Ovary (tissue), 10 donors: ENCODE measurements at regions of chr5 and their contacts with region 1.

Region 1: GRCh38 chr5:3843706-3844105 is 248.1 kb downstream of the IRX1 start:
- DNase-seq: no peak
- H3K4me3 ChIP-seq: no peak overlapping the region
- H3K27ac ChIP-seq: no peak overlapping the region
- H3K4me1 ChIP-seq: no peaks in the 10 kb centered on the region
- H3K27me3 ChIP-seq: no peaks in the 10 kb centered on the region
- CTCF ChIP-seq: no peak
- EP300 ChIP-seq: no peak
- POLR2A ChIP-seq: no peak

Region 2: GRCh38 chr5:3878267-3878666 is 34.6 kb after region 1 on chr5:
- intact Hi-C with region 1: loop called in 1 of 4 experiments (anchors 1 kb)
- DNase-seq: no peak
- H3K4me3 ChIP-seq: no peak overlapping the region
- H3K27ac ChIP-seq: no peak overlapping the region
- H3K4me1 ChIP-seq: no peaks in the 10 kb centered on the region
- H3K27me3 ChIP-seq: no peaks in the 10 kb centered on the region
- CTCF ChIP-seq: no peak
- EP300 ChIP-seq: no peak
- POLR2A ChIP-seq: no peak

Region 3: GRCh38 chr5:4068171-4068570 is 224.5 kb after region 1 on chr5:
- intact Hi-C with region 1: no loop called
- DNase-seq: no peak
- H3K4me3 ChIP-seq: no peak overlapping the region
- H3K27ac ChIP-seq: no peak overlapping the region
- H3K4me1 ChIP-seq: no peaks in the 10 kb centered on the region
- H3K27me3 ChIP-seq: no peaks in the 10 kb centered on the region
- CTCF ChIP-seq: no peak
- EP300 ChIP-seq: no peak
- POLR2A ChIP-seq: no peak